ENCODE measurements at regions of chr10 and their contacts with region 1.

Region 1: DNA sequence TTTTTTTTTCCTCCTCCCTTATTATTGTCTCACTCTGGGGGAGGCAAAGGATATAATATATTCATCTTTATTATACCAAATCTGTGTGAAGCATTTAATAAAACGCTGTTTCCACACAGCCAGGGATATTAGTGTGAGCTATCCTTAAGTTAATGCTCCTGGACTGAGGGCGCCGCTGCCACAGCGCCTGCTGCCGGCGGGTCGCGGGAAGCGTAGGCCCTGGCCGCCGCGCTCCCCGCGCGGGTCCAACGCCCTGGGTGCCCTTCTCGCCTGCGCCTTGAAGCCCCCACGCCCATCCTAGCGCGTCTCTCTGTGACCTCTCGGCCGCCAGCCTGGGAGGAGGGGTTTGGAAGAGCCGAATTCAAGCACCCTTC is 9.5 kb upstream of the LBX1 start:
- DNase-seq: no peak
- H3K4me3 ChIP-seq: no peak overlapping the region
- H3K4me3 Mint-ChIP-seq: no peak overlapping the region
- H3K27ac ChIP-seq: no peak overlapping the region
- H3K27ac Mint-ChIP-seq: no peak overlapping the region
- H3K4me1 ChIP-seq: peaks cover 24% of the 10 kb centered on the region
- H3K4me1 Mint-ChIP-seq: peaks cover 7 to 24% (median 16%) of the 10 kb centered on the region in 4 donors
- H3K27me3 ChIP-seq: peaks cover 65% of the 10 kb centered on the region
- H3K27me3 Mint-ChIP-seq: peaks cover 50 to 60% of the 10 kb centered on the region in 2 donors

Region 2: GRCh38 chr10:101222683-101223273 is 15.9 kb before region 1 on chr10:
- CTCF ChIA-PET with region 1: interaction called, 5 read pairs
- POLR2A ChIA-PET with region 1: interaction called, 7 read pairs
- intact Hi-C with region 1: loop called (anchors 2 kb)
- DNase-seq: peak in 1 of 5 donors; percentile 23
- H3K4me3 ChIP-seq: peak overlapping the region in 1 of 2 donors; percentile 38
- H3K4me3 Mint-ChIP-seq: peak overlapping the region in 7 of 8 donors; percentile 53 to 78 (median 69)
- H3K27ac ChIP-seq: no peak overlapping the region
- H3K27ac Mint-ChIP-seq: peak overlapping the region in 1 of 7 donors; percentile 55
- H3K4me1 ChIP-seq: peaks cover 54% of the 10 kb centered on the region
- H3K4me1 Mint-ChIP-seq: peaks cover 27 to 72% (median 39%) of the 10 kb centered on the region in 4 donors
- H3K27me3 ChIP-seq: peaks cover 85% of the 10 kb centered on the region
- H3K27me3 Mint-ChIP-seq: peaks cover 65 to 81% of the 10 kb centered on the region in 2 donors

Measured in CD4-positive, alpha-beta memory T cell (primary cell).